ENCODE measurements at regions of chr1 and their contacts with region 1.

Region 1: DNA sequence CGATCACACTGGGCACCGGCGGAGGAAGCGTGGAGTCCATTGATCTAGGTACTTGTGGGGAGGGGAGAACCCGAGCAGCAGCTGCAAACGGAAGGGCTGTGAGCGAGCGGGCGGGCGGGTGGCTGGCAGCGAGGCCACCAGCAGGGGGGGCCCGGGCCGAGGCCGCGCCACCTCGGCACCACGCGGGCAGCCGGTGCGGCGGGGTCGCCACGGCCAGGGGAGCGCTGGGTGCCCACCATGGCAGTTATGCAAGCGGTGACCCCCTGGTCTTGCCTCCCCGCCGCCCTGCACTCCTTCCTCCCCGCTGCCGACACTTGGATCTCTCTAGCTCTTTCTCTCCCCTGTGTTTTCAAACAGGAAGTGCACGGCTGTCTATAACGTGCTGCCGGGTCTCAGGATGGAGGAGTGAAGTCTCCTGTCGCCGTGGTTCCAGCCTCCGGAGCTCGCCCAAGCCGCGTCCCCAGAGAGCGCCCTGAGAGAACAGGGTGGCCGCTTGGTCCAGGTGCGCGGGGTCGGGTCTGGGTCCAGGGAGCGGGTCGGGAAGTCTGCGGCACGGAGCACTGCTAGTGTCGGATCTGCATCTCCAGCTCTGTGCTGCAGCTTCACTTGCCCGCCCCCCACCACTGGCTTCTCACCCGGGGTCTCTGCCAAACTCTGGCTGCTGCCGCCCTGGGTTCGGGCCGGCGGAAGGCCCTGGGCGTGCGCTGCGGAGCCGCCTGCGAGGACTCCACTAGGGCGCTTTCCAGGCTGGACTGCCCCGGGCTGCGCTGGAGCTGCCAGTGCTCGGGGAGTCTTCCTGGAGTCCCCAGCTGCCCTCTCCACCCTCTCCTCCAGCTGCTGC is 22.7 kb downstream of the LRRC8D start:
- DNase-seq: peak; percentile 68 to 88 (median 73)
- ATAC-seq: peak; percentile 85 to 97 (median 94)
- H3K4me3 ChIP-seq: peak overlapping the region; percentile 62 to 89 (median 74)
- H3K27ac ChIP-seq: peak overlapping the region in 11 of 12 donors; percentile 54 to 88 (median 73)
- H3K4me1 ChIP-seq: peaks cover 0 to 40% (median 12%) of the 10 kb centered on the region in 12 donors
- H3K27me3 ChIP-seq: no peaks in the 10 kb centered on the region
- CTCF ChIP-seq: peak; percentile 39 to 84 (median 74)
- POLR2A ChIP-seq: no peak

Region 2: GRCh38 chr1:89804642-89805237 is 38.8 kb before region 1 on chr1:
- intact Hi-C with region 1: loop called in 4 of 10 experiments (anchors 5 kb)
- DNase-seq: peak; percentile 77 to 88 (median 84)
- ATAC-seq: peak; percentile 82 to 94 (median 92)
- H3K4me3 ChIP-seq: no peak overlapping the region
- H3K27ac ChIP-seq: no peak overlapping the region
- H3K4me1 ChIP-seq: peaks cover 0 to 8% (median 0%) of the 10 kb centered on the region in 12 donors
- H3K27me3 ChIP-seq: no peaks in the 10 kb centered on the region
- CTCF ChIP-seq: peak; percentile 89 to 97 (median 92)
- POLR2A ChIP-seq: no peak

Region 3: GRCh38 chr1:89908672-89909436 is 65.4 kb after region 1 on chr1:
- intact Hi-C with region 1: loop called in 4 of 10 experiments (anchors 5 to 10 kb)
- DNase-seq: peak in 3 of 5 donors; percentile 36 to 49 (median 48)
- ATAC-seq: peak; percentile 25 to 71 (median 36)
- H3K4me3 ChIP-seq: no peak overlapping the region
- H3K27ac ChIP-seq: peak overlapping the region in 11 of 12 donors; percentile 19 to 77 (median 54)
- H3K4me1 ChIP-seq: peaks cover 6 to 70% (median 41%) of the 10 kb centered on the region in 12 donors
- H3K27me3 ChIP-seq: no peaks in the 10 kb centered on the region
- CTCF ChIP-seq: no peak
- POLR2A ChIP-seq: no peak

Region 4: DNA sequence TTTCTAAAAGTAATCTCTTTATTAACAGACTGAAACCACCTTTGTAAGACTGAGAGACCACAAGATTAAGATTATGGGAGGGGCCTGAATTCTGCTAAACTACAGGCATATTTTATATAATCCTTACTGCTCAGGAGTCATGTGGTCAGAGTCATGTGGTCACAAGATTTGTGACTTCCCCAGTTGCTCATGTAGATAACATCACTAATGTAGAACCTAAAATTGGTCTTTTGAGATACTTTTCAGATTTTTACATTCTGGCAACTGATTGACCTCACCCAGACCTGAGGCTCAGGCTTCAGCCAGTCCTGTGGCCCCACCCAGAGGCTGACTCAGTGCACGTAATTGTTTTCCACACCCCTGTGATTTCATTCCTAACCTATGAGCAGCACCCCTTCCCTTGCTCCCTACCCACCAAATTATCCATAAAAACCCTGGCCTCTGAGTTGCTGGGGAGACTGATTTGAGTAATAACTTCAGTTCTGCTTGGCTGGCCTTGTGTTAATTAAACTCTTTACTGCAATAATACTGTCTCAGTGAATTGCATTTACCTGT is 109.6 kb after region 1 on chr1:
- intact Hi-C with region 1: loop called in 2 of 10 experiments (anchors 10 kb)
- DNase-seq: peak in 3 of 5 donors; percentile 23 to 39 (median 37)
- ATAC-seq: peak in 3 of 4 donors; percentile 69 to 80 (median 79)
- H3K4me3 ChIP-seq: no peak overlapping the region
- H3K27ac ChIP-seq: no peak overlapping the region
- H3K4me1 ChIP-seq: peaks cover 0 to 16% (median 0%) of the 10 kb centered on the region in 12 donors
- H3K27me3 ChIP-seq: no peaks in the 10 kb centered on the region
- CTCF ChIP-seq: peak in 7 of 12 donors; percentile 9 to 38 (median 25)
- POLR2A ChIP-seq: no peak

Measured in heart left ventricle (tissue), 16 donors.